A673 (cell line): ENCODE measurements at regions of chr5 and their contacts with region 1.

Region 1: DNA sequence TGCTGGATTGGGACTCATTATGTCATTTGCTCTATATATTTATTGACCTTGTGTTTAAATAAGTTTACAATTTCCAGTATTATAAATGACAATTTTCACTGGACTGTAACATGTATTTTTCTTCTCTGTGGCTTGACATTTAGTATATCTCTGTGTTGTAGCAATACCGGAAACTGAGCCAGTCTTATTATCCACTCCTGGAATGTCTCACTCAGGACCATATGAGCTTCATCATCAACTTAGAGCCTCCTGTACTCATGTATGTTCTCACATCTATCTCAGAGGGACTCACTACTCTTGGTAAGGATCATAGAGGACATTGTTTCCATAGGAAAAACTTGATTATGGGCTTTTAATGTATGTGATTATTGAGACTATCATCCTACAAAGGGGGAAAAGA is 66.5 kb upstream of the TLX3 start:
- DNase-seq: no peak
- H3K4me3 ChIP-seq: no peak overlapping the region
- H3K27ac ChIP-seq: no peak overlapping the region
- H3K4me1 ChIP-seq: no peaks in the 10 kb centered on the region
- H3K27me3 ChIP-seq: peaks cover 13% of the 10 kb centered on the region
- CTCF ChIP-seq: no peak

Region 2: DNA sequence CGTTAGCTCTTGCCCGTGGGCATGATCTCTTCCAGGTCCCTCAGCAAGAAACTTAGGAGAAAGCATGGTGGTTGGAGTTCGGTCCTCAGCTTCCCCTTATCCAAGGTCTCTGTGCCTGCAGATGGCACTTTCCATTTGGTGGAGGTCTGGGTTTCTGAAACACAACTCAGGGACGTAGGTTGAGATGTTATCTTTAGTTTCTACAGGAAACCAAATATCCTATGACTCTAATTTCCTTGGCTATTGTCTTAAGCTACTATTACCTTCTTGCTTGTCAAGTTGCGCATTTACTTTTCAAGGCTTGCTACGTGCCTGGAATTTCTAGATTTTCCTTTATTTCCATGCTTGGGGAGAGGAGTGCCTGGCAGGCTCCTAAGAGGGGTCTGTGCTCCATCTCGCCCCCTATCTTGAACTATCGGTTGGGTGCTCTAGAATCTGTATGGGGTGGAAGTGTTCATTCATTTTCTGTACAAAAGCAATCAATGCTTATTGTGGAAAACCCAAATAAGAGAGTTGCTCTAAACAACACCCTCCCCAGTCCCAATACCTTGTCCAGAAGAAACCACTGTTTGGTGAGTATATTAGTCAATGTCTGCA is 771.6 kb before region 1 on chr5:
- CTCF ChIA-PET with region 1: no interaction called
- POLR2A ChIA-PET with region 1: interaction called, 13 read pairs
- intact Hi-C with region 1: no loop called
- DNase-seq: no peak
- H3K4me3 ChIP-seq: no peak overlapping the region
- H3K27ac ChIP-seq: no peak overlapping the region
- H3K4me1 ChIP-seq: no peaks in the 10 kb centered on the region
- H3K27me3 ChIP-seq: no peaks in the 10 kb centered on the region
- CTCF ChIP-seq: no peak